ENCODE measurements at regions of chr12 and their contacts with region 1.

Region 1: DNA sequence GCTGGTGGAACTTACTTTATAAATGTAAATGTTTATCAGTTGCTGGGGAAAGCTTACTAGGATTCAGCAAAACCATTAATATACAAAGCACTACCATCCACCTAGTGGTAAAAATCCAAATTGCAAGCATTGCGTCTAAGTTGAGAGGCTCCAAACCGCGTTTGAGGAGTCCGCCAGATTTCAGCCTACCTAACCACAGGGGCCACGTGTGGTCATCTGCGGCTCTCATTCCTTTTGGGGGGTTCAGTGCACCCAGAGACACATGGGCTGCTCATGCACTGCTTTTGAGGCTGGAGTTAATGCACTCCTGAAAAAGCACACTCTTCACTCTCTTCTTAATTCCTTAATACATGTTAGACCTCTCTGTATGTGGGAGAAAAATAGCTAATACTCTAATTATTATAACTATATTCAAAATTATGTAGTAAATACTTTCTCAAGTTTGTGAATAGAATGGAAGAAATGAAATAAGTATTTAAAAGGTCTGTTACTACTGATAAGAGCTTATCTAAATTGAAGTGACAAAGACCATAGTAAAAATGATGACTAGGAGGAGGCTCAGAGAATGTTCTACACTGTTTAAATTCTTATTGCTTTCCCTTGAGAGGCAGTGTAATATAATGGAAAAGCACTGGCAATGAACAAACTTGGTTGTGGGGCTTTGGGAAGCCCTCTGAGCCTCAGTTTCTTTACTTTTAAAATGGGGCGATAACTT is 41.4 kb upstream of the MANSC4 start:
- DNase-seq: peak; percentile 60
- ATAC-seq: peak; percentile 58
- H3K4me3 Mint-ChIP-seq: no peak overlapping the region
- H3K27ac Mint-ChIP-seq: no peak overlapping the region
- H3K4me1 Mint-ChIP-seq: peaks cover 20% of the 10 kb centered on the region
- H3K27me3 Mint-ChIP-seq: peaks cover 20% of the 10 kb centered on the region

Region 2: GRCh38 chr12:27733052-27733656 is 88.3 kb before region 1 on chr12:
- CTCF ChIA-PET with region 1: interaction called, 99 read pairs
- POLR2A ChIA-PET with region 1: interaction called, 3 read pairs
- DNase-seq: peak; percentile 53
- ATAC-seq: peak; percentile 57
- H3K4me3 Mint-ChIP-seq: no peak overlapping the region
- H3K27ac Mint-ChIP-seq: no peak overlapping the region
- H3K4me1 Mint-ChIP-seq: no peaks in the 10 kb centered on the region
- H3K27me3 Mint-ChIP-seq: no peaks in the 10 kb centered on the region

Region 3: DNA sequence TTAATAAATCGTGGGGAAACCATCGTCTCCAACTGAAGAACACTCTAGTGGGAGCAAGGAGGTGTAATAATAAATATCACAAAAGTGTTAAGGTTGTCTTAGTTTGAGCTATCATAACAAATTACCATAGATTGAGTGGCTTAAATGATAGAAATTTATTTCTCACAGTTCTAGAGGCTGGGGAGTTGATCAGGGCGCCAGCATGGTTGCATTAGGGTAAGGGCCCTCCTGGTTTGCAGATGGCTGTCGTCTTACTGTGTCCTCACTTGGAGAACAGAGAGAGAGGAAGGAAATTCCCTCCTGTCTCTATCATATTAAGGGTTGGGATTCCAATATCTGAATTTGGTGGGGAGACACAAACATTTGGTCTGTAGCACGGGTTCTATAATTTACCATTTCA is 77.8 kb before region 1 on chr12:
- CTCF ChIA-PET with region 1: interaction called, 18 read pairs
- POLR2A ChIA-PET with region 1: no interaction called
- DNase-seq: no peak
- ATAC-seq: no peak
- H3K4me3 Mint-ChIP-seq: no peak overlapping the region
- H3K27ac Mint-ChIP-seq: no peak overlapping the region
- H3K4me1 Mint-ChIP-seq: peaks cover 8% of the 10 kb centered on the region
- H3K27me3 Mint-ChIP-seq: no peaks in the 10 kb centered on the region

Region 4: GRCh38 chr12:27751386-27752047 is 69.9 kb before region 1 on chr12:
- CTCF ChIA-PET with region 1: interaction called, 14 read pairs
- POLR2A ChIA-PET with region 1: no interaction called
- DNase-seq: no peak
- ATAC-seq: no peak
- H3K4me3 Mint-ChIP-seq: no peak overlapping the region
- H3K27ac Mint-ChIP-seq: no peak overlapping the region
- H3K4me1 Mint-ChIP-seq: no peaks in the 10 kb centered on the region
- H3K27me3 Mint-ChIP-seq: no peaks in the 10 kb centered on the region

Region 5: DNA sequence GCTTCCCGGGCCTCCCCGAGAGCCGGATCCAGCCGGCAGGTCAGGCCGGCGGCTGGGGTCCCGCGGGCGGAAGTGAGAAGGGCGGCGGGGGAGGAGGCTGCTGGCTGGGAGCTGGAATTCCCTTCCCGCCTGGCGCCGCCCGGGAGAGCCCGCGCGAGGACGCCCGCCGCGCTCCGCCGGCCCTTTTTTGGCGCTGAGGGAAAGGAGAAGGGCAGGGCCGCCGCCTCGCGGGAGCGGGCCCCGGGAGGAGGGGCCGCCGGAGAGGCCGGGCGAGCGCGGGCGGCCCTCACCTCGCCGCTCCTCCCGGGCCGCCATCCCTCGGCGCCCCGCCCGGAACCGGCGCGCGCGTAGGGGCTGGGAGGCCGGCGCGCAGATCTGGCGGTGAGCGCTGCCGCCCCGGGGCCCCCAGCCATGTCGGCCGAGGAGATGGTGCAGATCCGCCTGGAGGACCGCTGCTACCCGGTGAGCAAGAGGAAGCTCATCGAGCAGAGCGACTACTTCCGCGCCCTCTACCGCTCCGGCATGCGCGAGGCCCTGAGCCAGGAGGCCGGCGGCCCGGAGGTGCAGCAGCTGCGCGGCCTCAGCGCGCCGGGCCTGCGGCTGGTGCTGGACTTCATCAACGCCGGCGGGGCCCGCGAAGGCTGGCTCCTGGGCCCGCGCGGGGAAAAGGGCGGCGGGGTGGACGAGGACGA is 41.4 kb before region 1 on chr12 and contains the starts of genes KLHL42 and MANSC4:
- CTCF ChIA-PET with region 1: interaction called, 24 read pairs
- POLR2A ChIA-PET with region 1: interaction called, 10 read pairs
- DNase-seq: peak; percentile 77
- ATAC-seq: peak; percentile 90
- H3K4me3 Mint-ChIP-seq: peak within 1 kb of the TSS; percentile 81
- H3K27ac Mint-ChIP-seq: peak within 1 kb of the TSS; percentile 86
- H3K4me1 Mint-ChIP-seq: peaks cover 34% of the 10 kb centered on the region
- H3K27me3 Mint-ChIP-seq: peaks cover 7% of the 10 kb centered on the region
- total RNA-seq, gene KLHL42: 15.9 to 16.9 TPM
- total RNA-seq, gene MANSC4: not detected

Region 6: DNA sequence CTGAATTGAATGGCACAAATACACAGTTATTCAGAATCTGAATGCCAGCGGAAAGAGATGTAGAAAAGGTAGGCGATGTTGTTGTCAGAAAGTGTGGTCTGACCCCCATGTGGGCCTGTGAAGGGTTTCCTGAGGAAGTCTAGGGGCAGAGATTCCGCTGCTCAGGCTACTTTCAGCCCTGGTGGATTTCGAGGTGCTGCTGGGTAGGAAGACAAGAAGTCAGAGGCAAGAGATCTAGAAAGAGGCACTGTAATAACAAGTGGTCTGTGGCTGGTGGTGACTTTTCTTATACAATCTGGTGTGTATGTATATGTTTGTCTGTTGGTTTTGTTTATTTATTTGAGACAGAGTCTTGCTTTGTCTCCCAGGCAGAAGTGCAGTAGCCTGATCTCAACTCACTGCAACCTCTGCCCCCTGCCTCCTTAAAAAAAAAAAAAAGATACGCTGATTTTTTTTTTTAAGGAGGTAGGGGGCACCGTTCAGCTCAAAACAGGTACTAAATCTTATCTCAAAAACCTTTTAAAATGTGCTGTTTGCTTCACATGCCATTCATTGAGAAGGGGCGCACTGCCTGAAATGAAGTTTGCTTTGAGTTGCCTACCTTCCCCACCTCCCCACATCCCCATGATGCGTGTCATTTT is 14.2 kb before region 1 on chr12:
- CTCF ChIA-PET with region 1: interaction called, 27 read pairs
- POLR2A ChIA-PET with region 1: interaction called, 3 read pairs
- DNase-seq: peak; percentile 61
- ATAC-seq: peak; percentile 76
- H3K4me3 Mint-ChIP-seq: peak overlapping the region; percentile 64
- H3K27ac Mint-ChIP-seq: peak overlapping the region; percentile 84
- H3K4me1 Mint-ChIP-seq: peaks cover 37% of the 10 kb centered on the region
- H3K27me3 Mint-ChIP-seq: peaks cover 14% of the 10 kb centered on the region

Region 7: DNA sequence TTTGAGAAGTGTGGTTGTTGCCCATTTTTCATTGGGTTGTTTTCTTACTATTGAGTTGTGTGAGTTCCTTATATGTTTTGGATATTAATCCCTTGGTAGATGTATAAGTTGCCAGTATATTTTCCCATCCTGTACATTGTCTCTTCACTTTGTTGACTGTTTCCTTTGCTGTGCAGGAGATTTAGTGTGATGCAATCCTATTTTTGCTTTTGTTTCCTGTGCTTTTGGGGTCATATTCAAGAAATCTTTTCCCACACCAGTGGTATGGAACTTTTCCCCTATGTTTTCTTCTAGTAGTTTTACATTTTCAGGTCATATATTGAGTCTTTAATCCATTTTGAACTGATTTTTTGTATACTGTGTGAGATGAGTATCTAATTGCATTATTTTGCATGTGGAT is 58.3 kb after region 1 on chr12:
- CTCF ChIA-PET with region 1: no interaction called
- POLR2A ChIA-PET with region 1: no interaction called
- DNase-seq: no peak
- ATAC-seq: no peak
- H3K4me3 Mint-ChIP-seq: no peak overlapping the region
- H3K27ac Mint-ChIP-seq: no peak overlapping the region
- H3K4me1 Mint-ChIP-seq: no peaks in the 10 kb centered on the region
- H3K27me3 Mint-ChIP-seq: peaks cover 6% of the 10 kb centered on the region